Activated B cell treated with CpG ODN at 0.5 μM for 24 hours (primary cell): ENCODE measurements at regions of chr3 and their contacts with region 1.

Region 1: GRCh38 chr3:190513409-190514162 is at the start of gene IL1RAP:
- DNase-seq: peak; percentile 83
- ATAC-seq: peak; percentile 96
- H3K4me3 Mint-ChIP-seq: peak within 1 kb of the TSS; percentile 92
- H3K27ac Mint-ChIP-seq: peak within 1 kb of the TSS; percentile 84
- H3K4me1 Mint-ChIP-seq: peaks cover 18% of the 10 kb centered on the region
- H3K27me3 Mint-ChIP-seq: peaks cover 9% of the 10 kb centered on the region
- CTCF ChIP-seq: no peak
- total RNA-seq, gene IL1RAP: 4.7 and 6.3 TPM in 2 replicates

Region 2: DNA sequence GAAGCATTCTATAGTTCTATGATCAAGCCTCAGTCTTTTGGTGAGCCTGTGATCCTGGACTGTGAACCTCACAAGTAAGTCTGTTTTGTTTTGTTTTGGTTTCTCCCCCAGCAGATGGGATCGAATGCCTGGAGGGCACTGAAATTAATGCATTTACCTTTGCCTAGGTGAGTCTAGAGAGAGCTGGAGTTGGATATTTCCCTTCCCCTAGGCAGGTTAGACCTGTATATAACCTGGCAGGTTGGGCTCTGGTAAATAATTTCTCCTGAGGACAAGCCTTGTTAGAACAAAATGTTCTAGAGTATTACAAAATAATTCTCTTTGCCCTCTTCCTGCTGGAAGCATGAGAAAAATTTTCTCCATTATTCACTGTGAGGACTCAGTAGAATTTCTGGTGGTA is 1130.0 kb before region 1 on chr3:
- CTCF ChIA-PET with region 1: no interaction called
- POLR2A ChIA-PET with region 1: no interaction called
- intact Hi-C with region 1: no loop called
- DNase-seq: no peak
- ATAC-seq: no peak
- H3K4me3 Mint-ChIP-seq: no peak overlapping the region
- H3K27ac Mint-ChIP-seq: no peak overlapping the region
- H3K4me1 Mint-ChIP-seq: no peaks in the 10 kb centered on the region
- H3K27me3 Mint-ChIP-seq: peaks cover 2% of the 10 kb centered on the region
- CTCF ChIP-seq: no peak

Region 3: GRCh38 chr3:190585805-190586630 is 72.4 kb after region 1 on chr3:
- CTCF ChIA-PET with region 1: no interaction called
- POLR2A ChIA-PET with region 1: no interaction called
- intact Hi-C with region 1: loop called (anchors 2 kb)
- DNase-seq: no peak
- ATAC-seq: peak; percentile 25
- H3K4me3 Mint-ChIP-seq: no peak overlapping the region
- H3K27ac Mint-ChIP-seq: no peak overlapping the region
- H3K4me1 Mint-ChIP-seq: peaks cover 25% of the 10 kb centered on the region
- H3K27me3 Mint-ChIP-seq: no peaks in the 10 kb centered on the region
- CTCF ChIP-seq: no peak

Region 4: GRCh38 chr3:190617185-190617584 is 103.6 kb after region 1 on chr3:
- CTCF ChIA-PET with region 1: no interaction called
- POLR2A ChIA-PET with region 1: interaction called, 8 read pairs
- intact Hi-C with region 1: loop called (anchors 1 kb)
- DNase-seq: no peak
- ATAC-seq: peak; percentile 83
- H3K4me3 Mint-ChIP-seq: peak overlapping the region; percentile 13
- H3K27ac Mint-ChIP-seq: peak overlapping the region; percentile 68
- H3K4me1 Mint-ChIP-seq: peaks cover 36% of the 10 kb centered on the region
- H3K27me3 Mint-ChIP-seq: no peaks in the 10 kb centered on the region
- CTCF ChIP-seq: no peak

Region 5: GRCh38 chr3:190870127-190870526 is 356.5 kb after region 1 on chr3:
- CTCF ChIA-PET with region 1: no interaction called
- POLR2A ChIA-PET with region 1: no interaction called
- intact Hi-C with region 1: no loop called
- DNase-seq: no peak
- ATAC-seq: no peak
- H3K4me3 Mint-ChIP-seq: no peak overlapping the region
- H3K27ac Mint-ChIP-seq: no peak overlapping the region
- H3K4me1 Mint-ChIP-seq: no peaks in the 10 kb centered on the region
- H3K27me3 Mint-ChIP-seq: peaks cover 15% of the 10 kb centered on the region
- CTCF ChIP-seq: no peak